BJ (cell line): ENCODE measurements at regions of chr1 and their contacts with region 1.

Region 1: DNA sequence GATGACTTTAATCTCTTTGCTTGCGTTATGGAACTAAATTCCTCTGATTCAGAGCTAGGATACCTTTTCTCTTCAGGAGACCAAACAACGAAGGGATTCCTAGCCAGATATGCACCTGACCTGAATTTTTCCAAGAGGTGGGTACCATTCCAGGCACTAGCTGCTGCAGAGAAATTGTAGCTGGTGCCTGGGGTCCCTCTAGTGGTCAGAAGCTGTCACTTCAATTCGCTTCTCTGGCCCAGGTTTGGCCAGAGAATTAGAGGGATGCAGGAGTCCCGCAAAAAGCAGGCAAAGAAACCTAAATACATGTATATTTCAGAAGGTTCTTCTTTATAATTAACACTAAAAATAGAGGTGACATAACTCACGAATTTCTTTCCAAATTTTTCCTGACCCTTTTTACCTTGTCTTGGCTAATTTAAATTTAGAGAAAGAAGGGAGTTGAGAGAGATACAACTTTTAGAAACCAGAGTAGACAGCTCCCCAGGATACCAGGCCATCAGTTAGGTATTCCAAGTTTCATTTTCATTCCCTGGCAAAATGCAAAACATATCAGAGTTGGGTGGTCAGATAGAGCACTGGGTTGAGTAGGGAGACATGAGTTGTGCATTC is 9.6 kb downstream of the ACKR1 start:
- DNase-seq: no peak
- H3K4me3 ChIP-seq: no peak overlapping the region
- H3K27me3 ChIP-seq: peaks cover 6% of the 10 kb centered on the region
- CTCF ChIP-seq: peak; percentile 94

Region 2: GRCh38 chr1:159084867-159085266 is 129.4 kb before region 1 on chr1:
- CTCF ChIA-PET with region 1: no interaction called
- POLR2A ChIA-PET with region 1: no interaction called
- DNase-seq: no peak
- H3K4me3 ChIP-seq: no peak overlapping the region
- H3K27me3 ChIP-seq: peaks cover 2% of the 10 kb centered on the region; the same call in 1 of the 2 replicates
- CTCF ChIP-seq: no peak

Region 3: DNA sequence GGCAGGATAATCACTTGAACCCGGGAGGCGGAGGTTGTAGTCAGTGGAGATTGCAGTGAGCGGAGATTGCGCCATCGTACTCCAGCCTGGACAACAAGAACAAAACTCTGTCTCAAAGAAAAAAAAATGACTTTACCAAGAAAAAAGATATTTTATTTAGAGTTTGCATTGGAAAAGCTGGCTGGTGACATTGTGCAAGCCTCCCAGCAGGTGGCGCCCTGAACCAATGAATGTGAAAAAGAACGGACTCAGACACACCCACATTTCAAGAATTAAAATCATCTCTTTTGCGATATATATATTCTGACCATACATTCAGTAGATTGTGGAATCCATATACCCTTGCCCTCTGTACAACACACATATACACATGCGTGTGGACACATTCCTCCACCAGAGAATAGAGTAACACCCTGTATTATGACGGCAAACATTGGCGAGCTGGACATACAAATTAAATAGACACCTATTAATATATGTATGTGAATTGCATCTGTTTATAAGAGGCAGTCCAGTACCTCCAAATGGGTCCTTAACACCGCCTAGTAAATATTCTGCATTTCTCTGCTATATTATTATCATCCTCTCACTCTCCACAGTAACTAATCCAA is 81.9 kb before region 1 on chr1:
- CTCF ChIA-PET with region 1: interaction called, 44 read pairs
- POLR2A ChIA-PET with region 1: no interaction called
- DNase-seq: no peak
- H3K4me3 ChIP-seq: no peak overlapping the region
- H3K27me3 ChIP-seq: peaks cover 1% of the 10 kb centered on the region; the same call in 1 of the 2 replicates
- CTCF ChIP-seq: peak; percentile 93

Region 4: GRCh38 chr1:159161001-159161718 is 53.1 kb before region 1 on chr1:
- CTCF ChIA-PET with region 1: interaction called, 69 read pairs
- POLR2A ChIA-PET with region 1: no interaction called
- DNase-seq: peak; percentile 57
- H3K4me3 ChIP-seq: no peak overlapping the region
- H3K27me3 ChIP-seq: no peaks in the 10 kb centered on the region
- CTCF ChIP-seq: peak; percentile 97

Region 5: DNA sequence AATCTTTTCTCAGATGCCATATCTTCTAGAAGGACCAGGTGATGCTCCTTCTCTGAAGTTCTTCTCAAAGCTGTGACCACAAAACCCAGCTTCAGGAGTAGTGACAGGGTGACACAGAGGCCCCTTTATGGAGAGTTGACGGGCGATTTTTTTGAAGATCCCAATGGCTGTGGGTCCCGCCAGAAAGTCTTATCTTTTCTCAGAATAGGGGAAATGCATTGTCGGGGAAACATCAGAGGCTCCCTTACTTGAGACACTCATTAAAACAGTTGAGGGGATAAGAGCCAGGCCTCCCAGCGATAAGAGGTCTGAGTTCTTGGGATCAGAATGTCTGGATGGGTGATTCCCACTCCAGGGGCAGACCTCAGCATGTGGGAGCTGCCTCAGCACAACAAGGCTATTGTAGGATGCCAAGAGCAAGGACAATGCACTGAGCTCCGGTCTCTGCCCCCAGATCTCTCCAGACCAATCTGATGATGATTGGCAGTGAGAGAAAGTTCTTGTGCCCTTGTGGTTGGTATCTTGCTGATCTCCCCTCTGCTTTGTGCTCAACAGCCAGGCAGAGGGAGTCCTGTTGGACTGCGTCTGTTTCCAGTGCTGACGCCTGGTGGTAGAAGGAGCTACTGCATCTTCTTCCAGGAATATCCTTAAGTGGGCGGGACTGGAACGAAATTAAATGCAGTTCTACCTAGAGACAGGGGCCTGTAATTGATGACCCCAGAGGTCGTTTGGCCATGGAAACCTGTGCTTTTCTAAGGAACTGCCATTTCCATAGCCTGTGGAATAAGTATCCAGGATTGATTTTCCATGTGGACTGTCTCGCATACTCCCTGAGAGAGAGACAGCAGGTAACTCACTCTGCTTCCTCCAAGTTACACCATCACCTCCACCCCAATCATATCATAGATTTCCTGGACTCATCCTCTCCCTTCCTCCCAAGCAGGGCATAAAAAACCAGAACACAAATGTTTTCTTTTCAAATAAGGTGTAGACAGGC is 16.4 kb before region 1 on chr1:
- CTCF ChIA-PET with region 1: interaction called, 69 read pairs
- POLR2A ChIA-PET with region 1: no interaction called
- DNase-seq: peak; percentile 6
- H3K4me3 ChIP-seq: no peak overlapping the region
- H3K27me3 ChIP-seq: no peaks in the 10 kb centered on the region; the same call in 1 of the 2 replicates
- CTCF ChIP-seq: peak; percentile 92

Region 6: DNA sequence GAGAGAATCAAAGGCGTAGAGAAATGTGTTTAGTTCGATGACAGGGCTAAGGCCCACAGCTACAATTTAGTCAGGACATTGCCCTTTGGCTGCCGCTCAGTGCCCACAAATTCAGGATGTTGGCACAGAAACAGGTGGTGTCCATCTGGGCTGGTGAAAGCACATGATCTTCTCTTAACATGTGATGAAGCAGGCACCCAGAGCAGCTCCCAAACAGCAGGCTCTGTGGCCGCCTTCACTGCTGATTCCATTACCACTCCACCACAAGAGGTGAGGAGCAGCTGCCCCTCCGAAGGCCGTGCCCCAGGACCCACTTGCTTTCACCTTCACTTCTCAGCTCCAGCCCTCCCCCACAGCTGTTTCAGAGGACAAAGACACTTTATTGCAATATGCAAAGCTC is 15.2 kb after region 1 on chr1:
- CTCF ChIA-PET with region 1: interaction called, 31 read pairs
- POLR2A ChIA-PET with region 1: no interaction called
- DNase-seq: no peak
- H3K4me3 ChIP-seq: no peak overlapping the region
- H3K27me3 ChIP-seq: no peaks in the 10 kb centered on the region
- CTCF ChIP-seq: no peak

Region 7: GRCh38 chr1:159282118-159282517 is 67.9 kb after region 1 on chr1:
- CTCF ChIA-PET with region 1: no interaction called
- POLR2A ChIA-PET with region 1: no interaction called
- DNase-seq: no peak
- H3K4me3 ChIP-seq: no peak overlapping the region
- H3K27me3 ChIP-seq: no peaks in the 10 kb centered on the region
- CTCF ChIP-seq: no peak

Region 8: DNA sequence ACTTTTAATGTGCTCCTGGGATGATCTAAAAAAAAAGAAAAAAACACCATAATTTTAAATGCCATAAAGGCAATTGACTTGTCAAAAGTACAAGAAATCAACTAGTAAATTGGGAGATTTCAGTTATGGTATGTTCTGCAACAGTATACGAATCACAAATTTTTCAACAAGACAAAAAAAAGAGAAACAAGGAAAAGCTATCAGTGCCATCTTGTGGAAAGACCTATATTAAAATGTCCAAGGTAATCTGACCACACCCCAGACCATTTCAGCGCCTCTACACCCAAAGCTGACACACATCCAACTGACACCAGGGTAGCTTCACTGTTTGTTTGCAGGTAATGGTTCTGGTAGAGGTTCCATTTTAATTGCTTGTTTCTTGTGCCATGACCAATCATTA is 561.5 kb after region 1 on chr1:
- CTCF ChIA-PET with region 1: interaction called, 11 read pairs
- POLR2A ChIA-PET with region 1: no interaction called
- DNase-seq: no peak
- H3K4me3 ChIP-seq: no peak overlapping the region
- H3K27me3 ChIP-seq: peaks cover 5% of the 10 kb centered on the region
- CTCF ChIP-seq: no peak